Gastrocnemius medialis (tissue), 4 donors: ENCODE measurements at regions of chr12 and their contacts with region 1.

Region 1: DNA sequence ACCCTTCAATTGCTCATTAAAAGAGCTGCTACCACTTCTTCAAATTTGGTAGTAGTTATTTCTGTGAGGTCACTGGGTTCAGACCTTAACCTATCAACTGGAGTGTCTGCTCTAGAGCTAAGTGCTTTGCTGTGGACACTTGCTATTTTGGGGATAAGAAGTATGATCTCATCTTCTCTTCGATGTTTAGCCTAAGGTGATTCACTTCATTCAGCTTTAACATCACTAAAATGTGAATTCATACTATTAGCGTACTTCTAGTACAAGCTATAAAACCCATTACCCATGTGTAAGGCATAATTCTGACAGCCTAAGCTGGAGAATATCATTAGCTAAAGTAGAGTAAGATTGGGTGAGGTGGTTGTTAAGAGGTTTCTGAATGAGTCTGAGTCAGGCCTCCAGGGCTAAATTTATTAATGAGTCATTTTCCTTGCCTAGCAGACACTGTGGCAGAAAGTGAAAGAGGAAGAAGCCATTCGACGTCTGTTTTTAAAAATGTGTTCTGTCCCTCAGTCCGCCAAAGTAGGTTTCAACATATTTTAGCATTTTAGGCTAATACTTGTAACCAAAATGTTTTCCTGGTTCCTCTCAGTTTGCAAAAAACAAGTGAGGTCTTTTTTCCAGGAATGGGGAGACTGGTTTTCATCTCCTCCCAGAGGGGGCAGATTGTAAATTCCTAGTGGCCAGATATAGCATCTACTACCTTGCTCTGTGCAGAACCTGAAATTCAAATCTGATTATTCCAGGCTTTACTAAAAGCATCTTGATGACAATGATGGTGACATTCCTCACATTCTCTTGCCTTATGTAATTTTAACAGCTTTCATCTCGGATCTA is 103.6 kb downstream of the SSPN start:
- DNase-seq: peak in 1 of 2 donors; percentile 24
- ATAC-seq: peak; percentile 99
- H3K4me3 ChIP-seq: peak overlapping the region; percentile 4 to 40 (median 32)
- H3K27ac ChIP-seq: peak overlapping the region; percentile 49 to 79 (median 77)
- H3K4me1 ChIP-seq: peaks cover 7 to 9% of the 10 kb centered on the region in 2 donors
- H3K27me3 ChIP-seq: no peaks in the 10 kb centered on the region
- CTCF ChIP-seq: peak in 3 of 5 experiments; percentile 20 to 61 (median 33)
- POLR2A ChIP-seq: no peak

Region 2: DNA sequence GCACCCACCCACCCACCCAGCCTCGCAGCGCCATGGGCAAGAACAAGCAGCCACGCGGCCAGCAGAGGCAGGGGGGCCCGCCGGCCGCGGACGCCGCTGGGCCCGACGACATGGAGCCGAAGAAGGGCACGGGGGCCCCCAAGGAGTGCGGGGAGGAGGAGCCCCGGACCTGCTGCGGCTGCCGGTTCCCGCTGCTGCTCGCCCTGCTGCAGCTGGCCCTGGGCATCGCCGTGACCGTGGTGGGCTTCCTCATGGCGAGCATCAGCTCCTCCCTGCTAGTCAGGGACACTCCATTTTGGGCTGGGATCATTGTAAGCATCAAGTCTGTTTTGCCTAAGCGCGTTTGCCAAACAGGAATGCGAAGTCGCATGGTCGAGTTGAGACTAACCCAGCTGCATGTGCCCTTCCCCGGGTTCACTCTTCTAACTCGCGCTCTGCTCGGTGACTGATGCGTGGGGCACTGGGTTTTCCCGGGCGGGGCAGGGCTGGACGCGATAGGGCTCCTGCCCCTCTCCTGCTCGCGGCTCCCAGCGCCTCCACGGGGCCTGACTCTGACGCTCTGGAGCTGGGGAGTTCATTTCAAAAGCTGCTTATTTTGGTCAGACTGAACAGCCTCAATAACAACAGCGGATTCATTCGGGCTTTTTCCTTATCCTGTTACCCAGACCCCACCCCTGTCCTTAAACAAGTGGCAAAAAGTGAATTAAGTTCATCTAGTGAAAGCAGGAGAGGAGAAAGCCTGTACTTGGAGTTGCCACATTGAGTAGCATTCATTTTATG is 103.2 kb before region 1 on chr12:
- in situ Hi-C with region 1: no loop called
- intact Hi-C with region 1: loop called (anchors 5 kb)
- DNase-seq: peak; percentile 39 to 69
- ATAC-seq: peak; percentile 74
- H3K4me3 ChIP-seq: peak overlapping the region; percentile 69 to 91 (median 76)
- H3K27ac ChIP-seq: peak overlapping the region; percentile 84 to 94 (median 92)
- H3K4me1 ChIP-seq: peaks cover 31 to 35% of the 10 kb centered on the region in 2 donors
- H3K27me3 ChIP-seq: no peaks in the 10 kb centered on the region
- CTCF ChIP-seq: no peak
- POLR2A ChIP-seq: peak; percentile 22 to 32